ENCODE measurements at regions of chr15 and their contacts with region 1.

Region 1: DNA sequence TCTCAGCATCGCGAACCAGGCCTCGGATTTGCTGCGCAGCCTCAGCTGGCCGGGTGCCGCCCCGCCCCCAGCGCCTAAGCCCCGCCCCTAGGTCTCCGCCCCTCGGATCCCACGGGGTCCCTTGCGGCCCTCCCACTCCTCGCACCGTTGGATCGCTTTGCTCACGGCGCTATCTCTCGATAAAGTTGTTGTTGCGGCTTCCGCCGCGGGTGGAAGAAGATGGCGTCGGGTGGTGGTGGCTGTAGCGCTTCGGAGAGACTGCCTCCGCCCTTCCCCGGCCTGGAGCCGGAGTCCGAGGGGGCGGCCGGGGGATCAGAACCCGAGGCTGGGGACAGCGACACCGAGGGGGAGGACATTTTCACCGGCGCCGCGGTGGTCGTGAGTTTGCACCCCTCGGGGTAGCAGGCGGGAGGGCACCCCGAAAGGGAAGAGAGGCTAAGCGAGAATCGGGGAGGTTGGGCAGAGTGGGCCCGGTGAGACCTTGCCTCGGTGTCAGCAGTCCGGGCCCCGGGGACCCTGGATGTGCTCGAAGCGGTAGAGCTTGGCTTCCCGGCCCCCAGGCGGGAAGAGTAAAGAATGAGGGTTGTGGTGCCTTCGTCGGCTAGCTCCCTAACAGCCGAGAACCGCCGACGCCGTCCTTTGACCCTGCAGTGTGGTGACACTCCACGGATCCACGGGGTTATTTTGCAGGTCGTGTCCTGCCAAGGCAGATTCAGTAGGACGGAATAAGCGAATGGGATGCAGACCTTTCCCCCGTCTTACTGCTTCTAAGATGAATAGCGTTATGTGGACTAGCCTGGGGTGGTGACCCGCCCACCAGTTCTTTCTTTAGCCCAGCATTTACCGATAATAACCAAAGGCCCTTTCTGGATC is at the start of gene SNX1:
- H3K4me3 Mint-ChIP-seq: peak within 1 kb of the TSS; percentile 100
- H3K27ac Mint-ChIP-seq: peak within 1 kb of the TSS; percentile 94
- H3K4me1 Mint-ChIP-seq: peaks cover 61% of the 10 kb centered on the region
- H3K27me3 Mint-ChIP-seq: no peaks in the 10 kb centered on the region

Region 2: GRCh38 chr15:63718590-63719035 is 377.4 kb before region 1 on chr15:
- intact Hi-C with region 1: no loop called
- H3K4me3 Mint-ChIP-seq: no peak overlapping the region
- H3K27ac Mint-ChIP-seq: no peak overlapping the region
- H3K4me1 Mint-ChIP-seq: peaks cover 13% of the 10 kb centered on the region
- H3K27me3 Mint-ChIP-seq: no peaks in the 10 kb centered on the region

Region 3: DNA sequence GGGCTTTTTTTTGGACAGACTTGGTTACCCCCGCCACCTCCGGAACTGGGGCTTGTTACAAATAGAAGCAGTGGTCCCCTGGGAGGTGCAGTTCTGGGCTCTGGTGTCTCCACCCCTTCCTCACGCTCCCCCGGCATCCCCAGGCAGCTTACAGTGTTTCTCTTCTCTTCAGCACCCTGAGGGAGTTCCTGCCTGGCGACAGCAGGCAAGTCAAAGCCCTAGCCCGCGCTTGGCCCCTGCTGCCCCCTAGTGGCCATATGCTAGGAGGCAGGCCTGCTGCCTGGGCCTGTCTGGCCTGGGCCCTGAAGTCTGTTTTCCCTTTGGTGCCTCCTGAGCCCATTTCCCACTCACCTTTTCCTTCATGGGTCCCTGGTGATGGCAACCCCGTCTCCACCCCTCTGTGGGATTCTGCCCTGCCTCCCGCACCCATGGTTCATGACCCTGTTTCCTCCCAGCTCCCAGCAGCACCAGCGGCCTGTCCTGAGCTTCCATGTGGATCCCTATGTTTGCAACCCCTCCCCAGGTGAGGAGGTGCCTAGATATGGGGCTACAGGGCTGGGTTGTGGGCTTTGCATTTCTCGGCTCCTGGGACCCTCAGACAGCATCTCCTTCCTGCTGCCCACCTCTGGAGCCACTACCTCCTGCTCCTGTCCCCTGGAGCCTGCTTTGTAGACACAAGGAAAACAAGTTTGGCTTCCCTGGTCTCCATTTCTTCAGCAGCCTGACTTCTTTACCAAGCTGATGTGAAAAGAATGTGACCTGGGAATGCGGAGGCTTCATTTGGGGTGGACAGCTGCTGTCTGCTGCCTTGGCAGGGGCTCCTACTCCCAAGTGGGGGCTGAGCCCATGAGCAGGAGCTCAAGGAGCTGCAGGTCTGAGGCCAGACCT is 57.7 kb after region 1 on chr15:
- intact Hi-C with region 1: loop called (anchors 5 kb)
- H3K4me3 Mint-ChIP-seq: no peak overlapping the region
- H3K27ac Mint-ChIP-seq: peak overlapping the region; percentile 61
- H3K4me1 Mint-ChIP-seq: peaks cover 58% of the 10 kb centered on the region
- H3K27me3 Mint-ChIP-seq: peaks cover 30% of the 10 kb centered on the region